HCT116 (cell line): ENCODE measurements at regions of chr17 and their contacts with region 1.

Region 1: GRCh38 chr17:63434876-63435684 is 11.0 kb downstream of the CYB561 start:
- DNase-seq: peak; percentile 37
- ATAC-seq: peak; percentile 65
- H3K4me3 ChIP-seq: no peak overlapping the region; a peak in 1 of 4 replicates
- H3K27ac ChIP-seq: peak overlapping the region; percentile 70
- H3K4me1 ChIP-seq: peaks cover 45% of the 10 kb centered on the region in 2 experiments
- H3K27me3 ChIP-seq: no peaks in the 10 kb centered on the region
- CTCF ChIP-seq: peak in 2 of 3 experiments; percentile 48 to 72; a peak in 4 of 6 replicates
- POLR2A ChIP-seq: no peak
- RAD21 ChIP-seq: peak; percentile 14; the same call in 1 of the 2 replicates

Region 2: DNA sequence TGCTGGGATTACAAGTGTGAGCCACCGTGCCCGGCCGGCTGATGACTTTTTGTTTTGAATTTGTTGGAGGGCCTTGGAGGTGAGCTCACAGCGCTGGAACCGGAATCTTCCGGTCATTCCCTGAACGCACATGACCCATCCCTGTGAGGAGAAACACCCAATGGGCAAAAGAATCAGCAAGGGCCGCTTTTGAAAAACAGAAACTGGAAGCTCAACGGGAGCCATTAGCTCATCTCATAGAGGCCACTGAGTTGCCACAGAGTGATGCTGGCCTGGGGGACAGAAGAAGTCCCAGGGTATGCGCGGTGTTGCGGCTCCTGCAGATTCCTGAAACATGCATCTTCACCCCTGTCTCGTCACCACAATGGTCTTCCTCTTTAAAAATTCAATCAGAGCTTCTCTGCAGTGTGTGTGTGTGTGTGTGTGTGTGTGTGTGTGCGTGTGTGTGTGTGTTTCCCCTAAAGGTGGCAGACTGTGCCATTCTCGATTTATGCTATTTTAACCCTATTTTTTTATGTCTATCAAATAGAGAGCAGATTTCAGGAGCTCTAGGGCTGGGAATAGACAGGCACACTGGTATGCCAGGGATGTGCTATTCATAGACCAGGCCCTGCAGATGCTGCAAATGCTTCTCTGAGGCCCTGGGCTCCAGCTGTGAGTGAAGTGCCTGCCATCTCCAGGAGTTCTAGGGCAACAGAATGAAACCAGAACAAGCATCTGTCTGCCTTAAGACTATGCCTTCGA is 695.3 kb before region 1 on chr17:
- CTCF ChIA-PET with region 1: no interaction called
- POLR2A ChIA-PET with region 1: no interaction called
- RAD21 ChIA-PET with region 1: no interaction called
- intact Hi-C with region 1: no loop called
- DNase-seq: no peak
- ATAC-seq: no peak
- H3K4me3 ChIP-seq: no peak overlapping the region
- H3K27ac ChIP-seq: no peak overlapping the region
- H3K4me1 ChIP-seq: no peaks in the 10 kb centered on the region
- H3K27me3 ChIP-seq: no peaks in the 10 kb centered on the region
- CTCF ChIP-seq: no peak
- POLR2A ChIP-seq: no peak
- RAD21 ChIP-seq: no peak

Region 3: GRCh38 chr17:63445979-63446691 is 11.1 kb after region 1 on chr17 and contains the start of gene CYB561:
- CTCF ChIA-PET with region 1: interaction called, 43 read pairs
- POLR2A ChIA-PET with region 1: interaction called, 23 read pairs
- RAD21 ChIA-PET with region 1: no interaction called
- intact Hi-C with region 1: no loop called
- DNase-seq: peak; percentile 47
- ATAC-seq: peak; percentile 90
- H3K4me3 ChIP-seq: peak within 1 kb of the TSS; percentile 85 to 86
- H3K27ac ChIP-seq: peak within 1 kb of the TSS; percentile 92
- H3K4me1 ChIP-seq: peaks cover 15 to 35% of the 10 kb centered on the region in 2 experiments
- H3K27me3 ChIP-seq: no peaks in the 10 kb centered on the region
- CTCF ChIP-seq: peak in 2 of 3 experiments; percentile 54 to 74; a peak in 4 of 6 replicates
- POLR2A ChIP-seq: peak; percentile 71
- RAD21 ChIP-seq: no peak
- total RNA-seq, gene CYB561: 67.6 TPM

Region 4: DNA sequence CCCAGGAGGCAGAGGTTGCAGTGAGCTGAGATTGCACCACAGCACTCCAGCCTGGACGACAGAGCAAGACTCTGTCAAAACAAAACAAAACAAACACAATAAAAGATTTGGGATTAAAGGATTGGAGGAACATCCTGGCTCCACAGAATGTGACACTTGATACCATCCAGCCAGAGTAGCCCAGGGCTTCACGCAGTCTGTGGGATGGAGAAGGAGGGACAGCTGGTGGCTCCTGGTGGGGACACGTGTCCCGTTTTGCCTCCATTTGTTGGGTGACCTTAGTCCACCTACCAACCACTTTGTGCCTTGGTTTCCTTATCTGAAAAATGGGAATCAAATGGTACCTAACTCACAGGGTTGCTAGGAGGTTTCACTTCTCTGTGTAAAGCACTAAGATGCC is 23.4 kb after region 1 on chr17:
- CTCF ChIA-PET with region 1: interaction called, 4 read pairs
- POLR2A ChIA-PET with region 1: interaction called, 10 read pairs
- RAD21 ChIA-PET with region 1: no interaction called
- intact Hi-C with region 1: no loop called
- DNase-seq: no peak
- ATAC-seq: no peak
- H3K4me3 ChIP-seq: no peak overlapping the region
- H3K27ac ChIP-seq: no peak overlapping the region
- H3K4me1 ChIP-seq: peaks cover 9 to 49% of the 10 kb centered on the region in 2 experiments
- H3K27me3 ChIP-seq: no peaks in the 10 kb centered on the region
- CTCF ChIP-seq: no peak
- POLR2A ChIP-seq: no peak
- RAD21 ChIP-seq: no peak

Region 5: GRCh38 chr17:63611354-63611753 is 176.3 kb after region 1 on chr17:
- CTCF ChIA-PET with region 1: interaction called, 33 read pairs
- POLR2A ChIA-PET with region 1: no interaction called
- RAD21 ChIA-PET with region 1: interaction called in 1 of 2 experiments, 4 read pairs
- intact Hi-C with region 1: no loop called
- DNase-seq: no peak
- ATAC-seq: no peak
- H3K4me3 ChIP-seq: no peak overlapping the region
- H3K27ac ChIP-seq: no peak overlapping the region
- H3K4me1 ChIP-seq: no peaks in the 10 kb centered on the region
- H3K27me3 ChIP-seq: no peaks in the 10 kb centered on the region
- CTCF ChIP-seq: no peak
- POLR2A ChIP-seq: no peak
- RAD21 ChIP-seq: no peak